ENCODE measurements at regions of chr15 and their contacts with region 1.

Region 1: GRCh38 chr15:74302821-74303359 is 64.6 kb downstream of the CYP11A1 start:
- DNase-seq: peak; percentile 47 to 87
- H3K4me3 ChIP-seq: no peak overlapping the region
- H3K27ac ChIP-seq: no peak overlapping the region
- H3K4me1 ChIP-seq: peaks cover 11 to 49% (median 29%) of the 10 kb centered on the region in 4 experiments
- H3K27me3 ChIP-seq: peaks cover 2 to 31% (median 25%) of the 10 kb centered on the region in 4 experiments; a peak in 6 of 7 replicates
- CTCF ChIP-seq: peak; percentile 81 to 92 (median 85)
- EP300 ChIP-seq: no peak
- POLR2A ChIP-seq: no peak
- RAD21 ChIP-seq: peak; percentile 80 to 89

Region 2: DNA sequence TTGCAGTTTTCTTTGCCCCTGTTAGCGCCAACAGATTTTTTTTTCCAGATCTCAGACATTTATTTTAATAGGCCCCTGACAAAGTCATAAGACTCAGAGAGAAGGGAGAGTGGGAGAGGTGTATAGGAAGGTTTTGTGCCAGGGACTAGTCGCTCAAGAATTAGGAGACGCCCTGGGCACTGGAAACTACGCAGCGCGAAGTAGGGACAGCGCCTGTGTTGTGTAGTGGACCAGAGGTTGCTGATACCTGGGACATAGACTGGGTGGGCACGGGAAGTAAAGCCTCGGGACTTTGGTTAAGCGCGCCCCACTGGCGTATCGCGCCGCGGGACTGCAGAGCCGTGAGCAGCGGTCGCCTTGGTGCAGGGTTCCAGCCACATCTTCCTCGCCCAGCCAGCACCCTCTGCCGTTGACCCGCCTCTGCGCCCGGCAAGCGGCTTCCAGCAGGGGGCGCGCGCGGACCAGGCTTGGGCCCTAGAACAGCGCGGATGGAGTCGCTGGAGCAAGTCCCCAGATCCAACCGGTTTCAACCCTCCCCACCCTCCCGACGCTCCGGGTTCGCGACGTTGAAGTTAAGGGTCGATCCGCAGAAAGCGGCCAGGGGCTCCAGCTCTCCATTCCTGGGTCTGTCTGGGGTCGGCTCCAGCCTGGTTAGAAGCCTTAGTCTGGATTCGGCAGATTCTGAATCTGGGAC is 175.5 kb before region 1 on chr15:
- CTCF ChIA-PET with region 1: interaction called, 65 read pairs
- POLR2A ChIA-PET with region 1: interaction called, 8 read pairs
- DNase-seq: peak; percentile 78 to 100
- H3K4me3 ChIP-seq: peak overlapping the region in 3 of 4 experiments; percentile 26 to 57 (median 36); a peak in 7 of 8 replicates
- H3K27ac ChIP-seq: no peak overlapping the region
- H3K4me1 ChIP-seq: peaks cover 2 to 55% (median 42%) of the 10 kb centered on the region in 4 experiments
- H3K27me3 ChIP-seq: peaks cover 49 to 64% (median 57%) of the 10 kb centered on the region in 4 experiments
- CTCF ChIP-seq: peak in 2 of 3 experiments; percentile 99; a peak in 3 of 4 replicates
- EP300 ChIP-seq: no peak
- POLR2A ChIP-seq: no peak
- RAD21 ChIP-seq: peak; percentile 96 to 99

Region 3: DNA sequence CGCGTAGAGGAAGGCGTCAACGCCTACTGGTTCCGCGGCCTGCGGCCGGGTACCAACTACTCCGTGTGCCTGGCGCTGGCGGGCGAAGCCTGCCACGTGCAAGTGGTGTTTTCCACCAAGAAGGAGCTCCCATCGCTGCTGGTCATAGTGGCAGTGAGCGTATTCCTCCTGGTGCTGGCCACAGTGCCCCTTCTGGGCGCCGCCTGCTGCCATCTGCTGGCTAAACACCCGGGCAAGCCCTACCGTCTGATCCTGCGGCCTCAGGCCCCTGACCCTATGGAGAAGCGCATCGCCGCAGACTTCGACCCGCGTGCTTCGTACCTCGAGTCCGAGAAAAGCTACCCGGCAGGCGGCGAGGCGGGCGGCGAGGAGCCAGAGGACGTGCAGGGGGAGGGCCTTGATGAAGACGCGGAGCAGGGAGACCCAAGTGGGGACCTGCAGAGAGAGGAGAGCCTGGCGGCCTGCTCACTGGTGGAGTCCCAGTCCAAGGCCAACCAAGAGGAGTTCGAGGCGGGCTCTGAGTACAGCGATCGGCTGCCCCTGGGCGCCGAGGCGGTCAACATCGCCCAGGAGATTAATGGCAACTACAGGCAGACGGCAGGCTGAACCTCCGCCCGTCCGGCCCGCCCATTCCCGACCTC is 168.4 kb before region 1 on chr15:
- CTCF ChIA-PET with region 1: interaction called, 65 read pairs
- POLR2A ChIA-PET with region 1: interaction called, 3 read pairs
- DNase-seq: peak in 1 of 2 experiments; percentile 89
- H3K4me3 ChIP-seq: peak overlapping the region in 3 of 4 experiments; percentile 20 to 62 (median 36); a peak in 6 of 8 replicates
- H3K27ac ChIP-seq: no peak overlapping the region
- H3K4me1 ChIP-seq: peaks cover 0 to 69% (median 57%) of the 10 kb centered on the region in 4 experiments; a peak in 6 of 7 replicates
- H3K27me3 ChIP-seq: peaks cover 72 to 96% (median 91%) of the 10 kb centered on the region in 4 experiments
- CTCF ChIP-seq: peak in 2 of 3 experiments; percentile 65 to 71; a peak in 3 of 4 replicates
- EP300 ChIP-seq: no peak
- POLR2A ChIP-seq: no peak
- RAD21 ChIP-seq: peak; percentile 48 to 58

Region 4: DNA sequence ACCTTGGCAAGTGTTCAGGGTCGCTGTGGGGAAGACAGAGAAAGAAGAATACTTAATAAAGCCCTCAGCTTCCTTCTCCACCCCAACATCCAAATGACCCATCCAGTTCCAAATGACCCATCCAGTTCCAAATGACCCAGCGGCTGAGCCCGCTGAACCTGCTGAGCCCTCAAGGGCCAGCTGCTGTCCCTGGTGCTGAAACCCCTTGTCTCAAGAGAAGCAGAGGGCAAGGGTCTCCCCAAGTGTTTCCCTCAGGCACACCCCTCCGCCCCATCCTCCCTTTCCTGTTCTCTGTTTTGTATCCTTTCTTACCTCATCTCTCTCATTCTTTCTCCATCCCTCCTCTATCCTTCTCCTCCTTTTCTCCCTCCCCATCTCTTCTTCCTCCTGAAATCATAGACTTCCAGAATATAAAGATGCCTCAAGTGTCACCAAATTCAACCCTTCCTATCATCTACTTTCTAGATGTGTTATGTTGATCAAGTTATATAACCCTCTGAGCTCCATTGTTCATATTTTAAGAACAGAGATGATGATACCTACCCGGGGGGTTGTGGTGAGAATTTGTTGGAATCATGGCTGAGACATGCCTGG is 37.7 kb before region 1 on chr15:
- CTCF ChIA-PET with region 1: interaction called, 87 read pairs
- POLR2A ChIA-PET with region 1: no interaction called
- DNase-seq: peak; percentile 27 to 87
- H3K4me3 ChIP-seq: no peak overlapping the region
- H3K27ac ChIP-seq: no peak overlapping the region
- H3K4me1 ChIP-seq: peaks cover 7 to 15% (median 9%) of the 10 kb centered on the region in 4 experiments
- H3K27me3 ChIP-seq: peaks cover 0 to 8% (median 0%) of the 10 kb centered on the region in 4 experiments; a peak in 1 of 7 replicates
- CTCF ChIP-seq: no peak
- EP300 ChIP-seq: no peak
- POLR2A ChIP-seq: no peak
- RAD21 ChIP-seq: peak in 1 of 2 experiments; percentile 9; a peak in 1 of 4 replicates

Region 5: DNA sequence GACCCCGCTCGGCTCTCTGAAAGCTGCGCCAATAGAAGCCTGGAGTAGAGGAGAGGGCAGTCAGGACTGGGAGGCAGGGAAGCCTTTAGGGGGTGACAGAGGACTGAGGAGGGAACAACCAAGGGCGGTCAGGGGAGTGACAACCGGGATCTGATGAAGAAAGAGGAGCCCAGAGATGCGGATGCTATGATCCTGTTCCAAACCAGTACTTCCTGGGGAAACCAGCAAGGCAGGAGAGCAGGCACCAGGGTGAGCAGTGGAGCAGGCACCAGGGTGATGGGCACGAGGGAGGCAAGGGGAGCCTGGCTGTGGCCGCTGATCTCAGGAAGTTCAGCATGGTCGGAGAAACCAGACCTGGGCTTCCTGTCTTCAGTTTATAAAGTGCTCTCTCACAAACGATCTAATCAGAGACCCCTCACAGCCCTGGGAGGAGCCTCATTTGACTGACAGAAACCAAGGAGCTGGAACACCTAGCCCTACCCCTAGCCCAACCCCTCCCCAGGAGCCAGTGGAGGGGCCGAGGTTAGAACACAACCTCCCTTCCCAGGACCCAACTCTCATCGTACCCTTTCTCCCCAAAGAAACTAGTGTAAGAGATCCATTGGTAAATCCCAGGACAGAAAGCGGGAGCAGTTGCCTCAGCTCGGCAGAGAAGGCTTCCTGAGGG is 31.9 kb before region 1 on chr15:
- CTCF ChIA-PET with region 1: interaction called, 87 read pairs
- POLR2A ChIA-PET with region 1: no interaction called
- DNase-seq: no peak
- H3K4me3 ChIP-seq: no peak overlapping the region
- H3K27ac ChIP-seq: no peak overlapping the region
- H3K4me1 ChIP-seq: 0 out of 7 replicates have a peak, but pooled peaks cover 0 to 3% (median 0%) of the 10 kb centered on the region in 4 experiments
- H3K27me3 ChIP-seq: peaks cover 0 to 6% (median 0%) of the 10 kb centered on the region in 4 experiments; a peak in 1 of 7 replicates
- CTCF ChIP-seq: no peak
- EP300 ChIP-seq: no peak
- POLR2A ChIP-seq: no peak
- RAD21 ChIP-seq: peak in 1 of 2 experiments; percentile 24; a peak in 2 of 4 replicates

Region 6: GRCh38 chr15:74291101-74292071 is 11.5 kb before region 1 on chr15:
- CTCF ChIA-PET with region 1: interaction called, 40 read pairs
- POLR2A ChIA-PET with region 1: interaction called, 5 read pairs
- DNase-seq: peak; percentile 93 to 98
- H3K4me3 ChIP-seq: peak overlapping the region in 2 of 4 experiments; percentile 2 to 44; a peak in 3 of 8 replicates
- H3K27ac ChIP-seq: no peak overlapping the region
- H3K4me1 ChIP-seq: peaks cover 3 to 12% (median 4%) of the 10 kb centered on the region in 4 experiments; a peak in 5 of 7 replicates
- H3K27me3 ChIP-seq: peaks cover 0 to 10% (median 6%) of the 10 kb centered on the region in 4 experiments; a peak in 6 of 7 replicates
- CTCF ChIP-seq: no peak
- EP300 ChIP-seq: no peak
- POLR2A ChIP-seq: no peak
- RAD21 ChIP-seq: peak in 1 of 2 experiments; percentile 30; a peak in 3 of 4 replicates

Region 7: DNA sequence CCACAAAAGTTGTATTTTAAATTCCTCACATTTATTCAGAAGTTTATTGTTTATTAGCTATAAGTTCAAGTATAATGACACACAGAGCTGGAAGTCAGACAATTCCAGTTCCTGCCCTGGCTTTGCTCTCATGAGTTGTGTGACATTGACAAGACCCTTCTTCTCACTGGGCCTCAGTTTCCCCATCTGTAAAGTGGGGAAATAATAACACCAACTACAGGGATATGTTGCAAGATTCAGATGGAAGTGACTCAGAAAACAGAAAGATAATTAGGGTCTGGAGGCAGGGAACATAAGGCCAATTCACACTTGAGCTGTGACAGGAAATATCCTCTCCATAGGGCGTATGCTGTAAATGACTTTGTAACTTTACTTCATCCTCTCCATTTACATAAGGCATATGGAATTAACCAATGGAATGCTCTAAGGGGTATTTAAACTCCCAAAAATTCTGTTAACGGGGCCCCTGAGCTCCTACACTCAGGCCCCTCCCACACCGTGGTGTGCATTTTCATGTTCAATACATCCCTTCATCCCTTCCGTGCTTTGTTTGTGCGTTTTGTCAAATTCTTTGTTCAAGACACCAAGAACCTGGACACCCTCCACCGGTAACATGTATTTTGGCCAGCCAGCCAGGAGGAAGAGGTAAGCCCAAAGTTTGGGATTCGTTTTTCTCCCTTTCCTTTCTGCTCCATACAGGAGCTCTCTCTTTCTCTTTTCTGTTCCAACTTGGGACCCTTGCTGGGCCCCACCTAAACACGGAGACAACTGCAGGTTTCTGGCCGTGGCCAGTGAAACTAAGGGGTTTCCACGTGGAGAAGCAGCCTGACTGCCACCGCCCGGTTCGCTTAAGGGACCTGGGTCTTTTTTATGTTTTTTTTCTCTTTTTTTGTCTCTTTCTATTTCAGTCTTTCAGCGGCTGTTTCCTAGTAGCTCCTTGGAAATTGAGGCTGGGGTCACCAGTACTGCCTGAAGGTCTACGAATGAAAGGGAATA is 47.7 kb after region 1 on chr15:
- CTCF ChIA-PET with region 1: no interaction called
- POLR2A ChIA-PET with region 1: no interaction called
- DNase-seq: no peak
- H3K4me3 ChIP-seq: no peak overlapping the region
- H3K27ac ChIP-seq: no peak overlapping the region
- H3K4me1 ChIP-seq: peaks cover 0 to 13% (median 2%) of the 10 kb centered on the region in 4 experiments; a peak in 3 of 7 replicates
- H3K27me3 ChIP-seq: no peaks in the 10 kb centered on the region
- CTCF ChIP-seq: no peak
- EP300 ChIP-seq: no peak
- POLR2A ChIP-seq: no peak
- RAD21 ChIP-seq: no peak

Region 8: DNA sequence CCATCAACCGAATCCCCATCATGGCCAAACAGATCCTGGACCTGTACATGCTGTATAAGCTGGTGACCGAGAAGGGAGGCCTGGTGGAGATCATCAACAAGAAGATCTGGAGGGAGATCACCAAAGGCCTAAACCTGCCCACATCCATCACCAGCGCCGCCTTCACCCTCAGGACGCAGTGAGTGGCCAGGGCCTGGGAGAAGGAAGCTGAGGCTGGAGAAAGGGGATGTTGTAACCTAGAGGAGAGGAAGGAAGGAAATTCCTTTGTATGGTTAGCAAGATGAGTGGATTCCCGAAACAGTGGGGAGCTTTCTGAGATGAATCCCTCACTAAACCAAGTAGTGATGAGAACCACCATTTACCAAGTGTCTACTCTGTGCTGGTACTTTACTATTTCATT is 286.9 kb after region 1 on chr15:
- CTCF ChIA-PET with region 1: no interaction called
- POLR2A ChIA-PET with region 1: no interaction called
- DNase-seq: no peak
- H3K4me3 ChIP-seq: no peak overlapping the region
- H3K27ac ChIP-seq: no peak overlapping the region
- H3K4me1 ChIP-seq: peaks cover 0 to 6% (median 5%) of the 10 kb centered on the region in 4 experiments; a peak in 3 of 7 replicates
- H3K27me3 ChIP-seq: no peaks in the 10 kb centered on the region
- CTCF ChIP-seq: no peak
- EP300 ChIP-seq: no peak
- POLR2A ChIP-seq: no peak
- RAD21 ChIP-seq: no peak